Esophagus squamous epithelium (tissue), 5 donors: ENCODE measurements at regions of chr15 and their contacts with region 1.

Region 1: GRCh38 chr15:72199711-72200212 is 2.2 kb upstream of the GRAMD2A start:
- DNase-seq: peak; percentile 16
- H3K4me3 ChIP-seq: no peak overlapping the region
- H3K27ac ChIP-seq: peak overlapping the region in 1 of 4 donors; percentile 2
- H3K4me1 ChIP-seq: peaks cover 23 to 92% (median 47%) of the 10 kb centered on the region in 3 donors
- H3K27me3 ChIP-seq: peaks cover 0 to 13% (median 0%) of the 10 kb centered on the region in 4 donors
- CTCF ChIP-seq: peak; percentile 67 to 94 (median 88)
- POLR2A ChIP-seq: no peak

Region 2: GRCh38 chr15:72272213-72273002 is 72.6 kb after region 1 on chr15 and contains the start of gene PARP6:
- intact Hi-C with region 1: loop called (anchors 5 kb)
- DNase-seq: peak; percentile 91
- H3K4me3 ChIP-seq: peak within 1 kb of the TSS; percentile 66 to 92 (median 88)
- H3K27ac ChIP-seq: peak within 1 kb of the TSS; percentile 91 to 96 (median 94)
- H3K4me1 ChIP-seq: peaks cover 0 to 27% (median 17%) of the 10 kb centered on the region in 3 donors
- H3K27me3 ChIP-seq: no peaks in the 10 kb centered on the region
- CTCF ChIP-seq: peak; percentile 51 to 82 (median 66)
- POLR2A ChIP-seq: peak in 3 of 4 donors; percentile 57 to 77 (median 60)
- total RNA-seq, gene PARP6: 12.2 to 62.2 (median 31.6) TPM